ENCODE measurements at regions of chr3 and their contacts with region 1.

Region 1: DNA sequence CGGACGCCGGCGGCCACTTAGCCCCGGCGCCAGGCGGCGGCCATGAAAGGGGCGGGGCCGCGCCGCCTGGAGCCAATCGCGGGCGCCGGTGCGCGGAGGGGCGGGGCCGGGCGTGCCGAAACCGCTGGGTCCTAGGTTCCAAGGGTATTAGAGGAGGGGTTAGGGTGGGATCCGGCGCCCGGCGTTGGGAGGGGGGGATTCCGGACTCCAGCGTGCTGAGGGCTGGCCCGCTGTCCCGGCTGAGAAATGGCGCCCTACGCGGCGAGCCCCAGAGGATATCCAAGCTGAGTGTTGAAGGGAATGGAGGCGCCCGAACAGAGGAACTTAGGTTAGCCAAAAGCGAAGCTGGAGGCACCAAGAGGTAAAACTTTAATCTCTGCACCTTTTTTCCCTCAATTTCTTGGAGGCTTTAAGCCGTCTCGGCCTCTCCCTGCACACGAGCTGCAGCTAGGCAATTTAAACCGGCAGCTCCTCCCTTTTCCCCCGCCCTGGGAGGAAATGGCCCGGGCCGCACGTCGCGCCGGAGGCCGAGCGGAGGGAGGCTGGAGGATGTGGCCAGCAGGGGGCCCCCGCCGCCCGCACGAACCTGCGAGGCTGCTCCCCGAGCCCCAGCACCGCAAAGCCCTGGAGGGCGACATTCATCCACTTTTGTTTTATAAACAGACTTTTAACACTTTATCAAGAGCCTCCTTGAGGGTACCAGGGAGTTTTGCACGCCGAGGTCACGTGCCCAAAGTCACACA is at the start of gene XXYLT1:
- DNase-seq: peak; percentile 91
- CTCF ChIP-seq: peak; percentile 93

Region 2: GRCh38 chr3:194671900-194672808 is 599.1 kb before region 1 on chr3 and contains the start of gene LSG1:
- CTCF ChIA-PET with region 1: interaction called, 23 read pairs
- POLR2A ChIA-PET with region 1: no interaction called
- DNase-seq: peak; percentile 88
- CTCF ChIP-seq: no peak

Region 3: DNA sequence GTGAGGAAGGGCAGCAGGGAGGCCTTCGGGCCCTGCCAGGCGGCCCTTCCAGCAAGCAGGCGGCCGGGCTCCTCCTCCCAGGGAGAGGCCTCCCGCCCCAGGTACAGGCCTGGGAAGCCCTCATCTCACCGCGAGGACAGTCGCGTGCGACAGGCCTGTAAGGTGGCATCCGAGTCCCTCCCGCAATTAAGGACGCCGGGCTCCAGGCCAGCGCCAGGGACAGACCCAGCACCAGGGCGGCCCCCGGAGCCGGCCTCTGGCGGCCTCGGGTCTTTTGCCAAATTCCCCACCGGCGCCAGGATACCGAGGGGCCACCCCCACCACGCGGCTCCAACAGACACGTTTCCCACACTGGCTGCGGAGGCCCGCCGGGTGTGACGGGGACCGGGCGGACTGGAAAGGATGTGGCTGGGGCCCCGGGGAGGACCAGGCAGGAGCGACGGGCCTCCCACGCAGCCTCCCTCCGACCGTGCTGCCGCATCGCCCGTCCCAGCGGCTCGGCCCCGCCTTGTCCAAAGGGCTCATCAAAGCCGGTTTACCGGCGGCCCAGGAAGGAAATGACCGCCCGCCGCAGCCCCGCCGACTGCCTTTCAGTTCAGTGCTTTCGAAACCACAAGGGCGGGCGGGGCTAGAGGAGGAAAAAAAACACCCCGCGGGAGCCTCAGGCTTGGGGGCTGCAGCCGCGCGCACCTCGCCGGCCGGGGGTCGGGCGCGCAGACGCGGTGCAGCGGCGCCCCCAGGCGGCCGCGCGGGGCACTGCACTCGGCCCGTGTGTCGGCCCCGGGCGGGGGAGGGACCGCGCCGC is 11.6 kb before region 1 on chr3:
- CTCF ChIA-PET with region 1: interaction called, 72 read pairs
- POLR2A ChIA-PET with region 1: no interaction called
- DNase-seq: peak; percentile 95
- CTCF ChIP-seq: peak; percentile 97

Region 4: DNA sequence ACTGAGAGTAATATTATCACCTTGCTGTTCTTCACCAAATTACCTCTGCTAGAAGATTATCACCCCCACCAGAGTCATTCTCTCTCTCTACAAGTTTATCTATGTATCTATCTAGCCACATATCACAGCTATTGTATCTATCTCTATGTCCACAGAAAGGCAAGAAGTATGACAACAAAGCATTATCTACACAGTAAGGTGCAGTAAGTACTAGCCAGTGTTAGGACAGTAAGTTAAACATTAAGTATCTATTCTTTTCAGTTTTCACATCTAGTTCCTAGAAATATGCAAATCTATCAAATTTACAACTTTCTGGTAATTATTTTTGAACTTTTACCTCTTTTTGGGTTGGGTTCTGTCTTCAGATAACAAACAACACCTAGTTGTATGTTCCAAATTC is 26.2 kb after region 1 on chr3:
- CTCF ChIA-PET with region 1: interaction called, 19 read pairs
- POLR2A ChIA-PET with region 1: no interaction called
- DNase-seq: no peak
- CTCF ChIP-seq: no peak

Region 5: GRCh38 chr3:195511136-195511535 is 239.8 kb after region 1 on chr3:
- CTCF ChIA-PET with region 1: interaction called, 27 read pairs
- POLR2A ChIA-PET with region 1: no interaction called
- DNase-seq: no peak
- CTCF ChIP-seq: no peak

Region 6: DNA sequence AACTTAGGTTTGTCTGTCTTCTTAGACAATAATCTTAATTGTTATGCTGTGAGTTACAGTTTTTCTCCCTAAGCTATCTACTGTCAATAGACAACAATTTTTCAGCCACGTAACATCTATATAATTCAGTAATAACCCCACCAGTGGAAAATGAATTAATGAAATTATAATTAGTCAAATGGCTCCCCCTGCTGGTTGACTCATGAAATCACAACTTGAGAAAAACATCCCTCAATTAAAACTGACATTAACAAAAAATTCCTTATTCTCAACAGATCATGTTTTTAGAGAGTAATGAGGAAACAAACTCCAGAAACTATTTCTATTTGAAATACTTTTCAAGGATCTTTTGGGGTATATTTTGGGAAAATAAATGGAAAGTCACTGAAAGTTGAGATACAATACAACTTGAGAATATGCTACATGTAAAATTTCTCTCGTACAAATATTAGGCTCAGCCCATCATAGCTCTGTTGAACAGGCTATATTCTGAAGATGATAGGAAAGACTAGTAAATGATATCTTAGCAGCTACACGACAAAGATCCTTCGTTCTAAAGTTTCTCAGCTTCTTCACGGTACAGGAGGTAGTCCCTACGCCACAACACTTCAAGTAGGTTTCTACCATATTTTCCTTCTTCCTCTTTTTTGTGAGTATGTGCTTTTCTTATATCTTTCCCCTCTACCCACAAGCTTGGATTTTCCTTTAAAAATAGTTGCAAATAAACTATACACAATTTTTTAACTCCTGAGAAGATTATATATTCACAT is 251.2 kb after region 1 on chr3:
- CTCF ChIA-PET with region 1: interaction called, 215 read pairs
- POLR2A ChIA-PET with region 1: interaction called, 3 read pairs
- DNase-seq: peak; percentile 54
- CTCF ChIP-seq: peak; percentile 52

Region 7: GRCh38 chr3:195542698-195543499 is 271.6 kb after region 1 on chr3 and contains the start of gene PPP1R2:
- CTCF ChIA-PET with region 1: interaction called, 20 read pairs
- POLR2A ChIA-PET with region 1: no interaction called
- DNase-seq: peak; percentile 96
- CTCF ChIP-seq: no peak